H1 (cell line): ENCODE measurements at regions of chr12 and their contacts with region 1.

Region 1: DNA sequence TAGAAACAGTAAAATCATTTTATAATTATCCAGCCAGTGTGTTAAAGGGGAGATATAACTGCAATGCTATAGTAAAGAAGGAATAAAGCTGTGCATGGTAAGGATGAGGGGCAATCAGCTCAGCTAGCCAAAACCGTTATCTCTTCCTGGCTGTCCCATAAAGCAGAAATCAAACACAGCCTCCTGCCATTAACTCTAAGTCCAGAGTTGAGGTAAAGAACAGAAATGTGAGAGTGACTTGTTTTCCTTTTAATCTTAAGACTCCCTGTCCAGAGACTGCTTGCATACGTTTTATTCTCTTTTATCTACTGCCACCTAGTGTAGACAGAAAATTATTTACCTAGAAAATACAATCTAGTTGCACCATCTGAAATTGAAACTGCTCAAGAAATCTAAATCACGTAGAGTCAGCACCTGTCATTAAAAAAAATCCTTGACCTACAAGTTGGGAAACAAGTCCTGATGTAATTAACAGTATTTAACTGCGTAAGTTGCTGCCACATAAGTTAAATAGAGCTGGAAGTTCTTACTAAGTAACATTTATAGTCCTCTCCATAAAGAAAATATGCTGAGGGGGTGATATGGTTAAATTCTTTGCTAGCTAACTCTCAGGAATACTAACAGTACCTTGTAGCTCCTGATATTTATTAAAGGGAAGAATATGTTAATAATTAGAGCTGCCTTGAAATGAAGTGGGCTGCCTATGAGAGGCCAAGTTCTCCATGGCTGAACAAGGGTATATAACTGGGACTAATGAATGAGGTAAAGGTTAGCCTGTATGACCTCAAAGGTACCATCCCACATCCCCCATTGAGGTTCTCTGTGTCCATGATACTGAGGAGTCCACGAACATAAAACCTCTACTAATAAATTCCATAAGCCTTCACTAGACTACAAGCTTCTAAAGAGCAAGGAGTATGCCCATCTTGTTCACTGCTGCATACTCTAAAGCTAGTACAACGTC is 62.7 kb downstream of the GALNT4 start:
- DNase-seq: no peak
- H3K4me3 ChIP-seq: no peak overlapping the region
- H3K27ac ChIP-seq: no peak overlapping the region
- H3K4me1 ChIP-seq: peaks cover 0 to 4% (median 1%) of the 10 kb centered on the region in 4 experiments; a peak in 3 of 7 replicates
- H3K27me3 ChIP-seq: no peaks in the 10 kb centered on the region
- CTCF ChIP-seq: peak in 2 of 3 experiments; percentile 34 to 37; a peak in 2 of 4 replicates
- EP300 ChIP-seq: no peak
- POLR2A ChIP-seq: no peak
- RAD21 ChIP-seq: peak; percentile 78 to 84

Region 2: DNA sequence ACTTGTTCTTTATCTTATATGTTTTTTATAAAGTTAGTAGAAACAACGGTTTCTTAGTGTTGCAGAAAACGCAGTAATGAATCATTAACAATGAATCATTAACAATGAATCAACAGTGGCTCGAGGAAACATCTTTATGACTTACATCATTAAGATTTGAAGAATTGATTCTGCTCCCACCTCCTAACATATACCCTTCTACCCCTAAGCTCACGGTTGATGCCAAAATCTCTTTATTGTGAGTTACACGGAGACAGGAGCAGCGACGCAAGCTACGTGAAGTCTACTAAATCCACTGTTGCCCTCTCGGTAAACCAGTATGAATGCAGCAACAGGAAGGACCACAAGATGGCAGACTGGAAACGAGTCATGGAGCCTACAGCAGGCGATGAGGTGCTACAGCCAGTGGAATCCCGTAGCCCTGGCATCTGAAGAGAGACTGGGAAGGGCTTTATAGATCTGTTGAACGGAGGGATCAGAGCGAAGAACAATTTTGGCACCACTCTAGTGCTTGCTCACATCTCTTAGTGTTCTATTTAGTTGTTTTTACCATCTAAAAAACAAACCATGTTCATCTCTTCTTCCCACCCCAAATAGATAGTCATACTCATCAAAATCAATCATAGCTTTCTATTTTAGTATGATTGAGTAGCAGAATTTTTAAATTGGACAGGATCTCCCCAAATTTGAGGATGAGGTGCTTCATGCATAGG is 442.4 kb before region 1 on chr12:
- CTCF ChIA-PET with region 1: interaction called, 30 read pairs
- POLR2A ChIA-PET with region 1: no interaction called
- DNase-seq: peak; percentile 41 to 81
- H3K4me3 ChIP-seq: peak overlapping the region in 1 of 4 experiments; percentile 19; a peak in 1 of 8 replicates
- H3K27ac ChIP-seq: no peak overlapping the region
- H3K4me1 ChIP-seq: no peaks in the 10 kb centered on the region
- H3K27me3 ChIP-seq: no peaks in the 10 kb centered on the region
- CTCF ChIP-seq: peak; percentile 72 to 97 (median 96)
- EP300 ChIP-seq: no peak
- POLR2A ChIP-seq: no peak
- RAD21 ChIP-seq: peak; percentile 98 to 99

Region 3: DNA sequence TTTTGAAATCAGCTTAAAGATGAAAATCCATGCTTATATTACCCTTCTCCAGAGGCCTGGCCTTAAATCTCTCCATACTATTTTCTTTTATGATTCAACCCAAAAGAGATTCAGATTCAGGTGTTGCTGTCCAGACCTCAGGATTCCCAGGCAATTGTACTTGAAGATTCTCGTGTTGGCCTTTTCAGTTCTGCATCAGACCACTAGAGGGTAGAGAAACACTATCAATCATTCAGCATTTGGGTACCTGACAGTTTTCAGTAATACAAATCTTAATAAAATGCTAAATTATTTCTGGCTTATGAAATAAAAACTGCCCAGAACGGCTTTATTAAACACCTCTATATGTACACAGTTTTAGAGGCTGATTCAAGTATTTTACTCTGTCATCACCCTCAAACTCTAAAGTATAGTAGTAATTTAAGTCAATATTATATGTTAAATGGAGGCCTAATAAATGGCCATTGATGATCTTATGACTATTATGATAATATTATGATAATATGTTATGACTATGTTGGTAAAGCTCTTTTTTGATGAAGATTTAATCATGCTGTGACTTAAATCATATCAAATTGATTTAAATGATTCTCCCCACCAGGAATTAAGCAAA is 410.8 kb before region 1 on chr12:
- CTCF ChIA-PET with region 1: interaction called, 35 read pairs
- POLR2A ChIA-PET with region 1: no interaction called
- DNase-seq: no peak
- H3K4me3 ChIP-seq: no peak overlapping the region
- H3K27ac ChIP-seq: no peak overlapping the region
- H3K4me1 ChIP-seq: no peaks in the 10 kb centered on the region
- H3K27me3 ChIP-seq: no peaks in the 10 kb centered on the region; a peak in 1 of 7 replicates
- CTCF ChIP-seq: peak in 2 of 3 experiments; percentile 63 to 79; a peak in 3 of 4 replicates
- EP300 ChIP-seq: no peak
- POLR2A ChIP-seq: no peak
- RAD21 ChIP-seq: peak; percentile 96 to 97

Region 4: DNA sequence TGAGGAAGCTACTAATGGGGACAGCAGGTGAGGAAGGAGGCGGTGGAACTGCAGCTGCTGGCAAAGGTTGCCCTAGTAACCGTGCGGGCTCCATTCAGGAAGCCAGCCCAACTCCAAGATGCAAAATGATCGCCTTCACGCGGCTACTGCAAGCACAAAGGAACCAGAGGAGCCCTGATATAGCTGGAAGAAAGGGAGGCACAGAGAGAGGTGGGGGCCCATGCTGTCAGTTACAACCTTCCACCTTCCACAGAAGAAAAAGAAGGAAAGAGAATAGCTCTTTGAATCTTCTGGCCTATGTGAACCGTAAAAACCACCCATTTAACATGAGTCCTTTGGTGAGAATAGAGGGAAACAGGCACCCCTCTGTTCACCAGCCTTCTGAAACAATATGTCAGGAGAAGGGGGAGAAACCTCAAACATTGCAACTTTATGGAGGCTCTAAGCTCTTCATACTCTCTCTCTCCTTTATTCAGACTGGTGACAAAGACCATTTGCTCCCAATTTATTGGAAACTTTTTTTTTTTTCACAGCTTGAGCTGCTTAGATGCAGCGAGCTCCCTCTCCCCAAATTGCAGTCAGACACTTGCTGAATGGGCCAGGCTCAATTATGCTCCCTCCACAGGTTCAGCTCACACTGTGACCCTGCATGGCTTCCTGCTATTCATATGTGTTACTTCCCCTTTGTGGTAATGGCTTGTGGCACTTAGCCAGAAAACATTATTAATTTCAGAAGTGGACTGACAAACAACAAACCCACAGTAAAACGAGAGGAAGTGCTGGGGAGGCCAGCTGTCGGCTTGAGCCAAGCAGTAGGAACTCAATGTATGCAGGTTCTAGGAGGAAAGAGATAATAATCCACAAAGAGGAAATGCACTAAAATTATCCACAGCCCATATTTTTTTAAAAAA is 115.8 kb before region 1 on chr12:
- CTCF ChIA-PET with region 1: interaction called, 28 read pairs
- POLR2A ChIA-PET with region 1: interaction called, 8 read pairs
- DNase-seq: peak in 1 of 2 experiments; percentile 75
- H3K4me3 ChIP-seq: peak overlapping the region in 2 of 4 experiments; percentile 3 to 44; a peak in 4 of 8 replicates
- H3K27ac ChIP-seq: no peak overlapping the region
- H3K4me1 ChIP-seq: peaks cover 8 to 29% (median 22%) of the 10 kb centered on the region in 4 experiments
- H3K27me3 ChIP-seq: peaks cover 0 to 17% (median 6%) of the 10 kb centered on the region in 4 experiments; a peak in 6 of 7 replicates
- CTCF ChIP-seq: no peak
- EP300 ChIP-seq: no peak
- POLR2A ChIP-seq: peak in 1 of 2 experiments; percentile 52; a peak in 1 of 3 replicates
- RAD21 ChIP-seq: peak; percentile 14 to 32; a peak in 3 of 4 replicates

Region 5: DNA sequence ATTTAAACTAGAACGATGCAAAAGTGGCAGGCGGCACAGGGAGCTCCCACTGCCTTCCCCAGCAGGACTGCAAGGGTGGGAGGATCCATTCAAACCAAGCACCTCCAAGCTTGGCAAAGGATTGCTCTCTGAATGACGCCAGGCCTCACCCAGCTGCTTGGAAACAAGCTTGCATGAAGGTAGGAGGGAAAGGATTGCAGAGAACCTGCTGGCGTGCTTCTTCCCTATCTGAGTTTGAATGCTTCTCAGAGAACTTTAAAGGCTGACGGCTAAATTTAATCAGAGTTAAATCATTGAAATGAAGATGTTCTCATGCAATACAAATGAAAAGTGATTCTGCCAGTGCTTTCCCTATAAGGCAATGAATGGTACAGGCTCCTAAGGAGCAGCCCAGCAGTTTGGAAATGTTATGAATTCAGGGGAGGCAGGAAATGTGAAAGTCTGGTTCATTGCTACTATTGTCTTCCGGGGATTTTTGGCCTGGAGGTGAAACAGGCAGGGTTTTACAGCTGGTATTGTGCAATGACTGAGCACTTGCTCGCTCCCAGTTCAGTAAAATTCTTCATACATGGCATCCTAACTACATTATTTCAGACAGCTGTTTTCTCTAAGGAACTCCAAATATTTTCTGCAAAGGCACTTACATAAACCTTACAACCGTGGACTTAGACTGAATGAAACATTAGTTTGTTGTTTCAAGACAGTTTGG is 77.7 kb before region 1 on chr12:
- CTCF ChIA-PET with region 1: no interaction called
- POLR2A ChIA-PET with region 1: no interaction called
- DNase-seq: peak; percentile 15 to 52
- H3K4me3 ChIP-seq: no peak overlapping the region
- H3K27ac ChIP-seq: no peak overlapping the region
- H3K4me1 ChIP-seq: peaks cover 2 to 18% (median 10%) of the 10 kb centered on the region in 4 experiments; a peak in 6 of 7 replicates
- H3K27me3 ChIP-seq: no peaks in the 10 kb centered on the region
- CTCF ChIP-seq: no peak
- EP300 ChIP-seq: no peak
- POLR2A ChIP-seq: no peak
- RAD21 ChIP-seq: no peak

Region 6: DNA sequence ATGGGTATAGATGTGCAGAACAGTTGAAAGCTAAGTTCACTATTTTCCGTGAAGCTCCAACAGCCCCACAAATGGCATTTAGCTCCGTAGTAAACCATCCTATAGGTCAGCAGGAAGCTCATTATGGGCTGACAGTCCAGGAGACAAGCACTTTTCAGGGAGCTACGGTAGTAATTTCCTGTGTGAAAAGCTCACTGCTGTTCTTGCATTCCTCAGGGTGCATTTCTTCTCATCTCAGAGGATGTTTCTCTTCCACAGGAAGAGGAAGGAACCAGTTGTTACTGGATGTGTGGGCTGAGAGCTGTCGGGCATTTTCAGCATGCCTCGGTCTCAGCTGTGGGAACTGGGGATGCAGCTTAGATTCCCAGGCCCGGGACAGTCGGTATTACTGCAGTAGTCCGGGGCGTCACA is 10.1 kb before region 1 on chr12:
- CTCF ChIA-PET with region 1: interaction called, 11 read pairs
- POLR2A ChIA-PET with region 1: interaction called, 6 read pairs
- DNase-seq: peak; percentile 7 to 50
- H3K4me3 ChIP-seq: peak overlapping the region in 1 of 4 experiments; percentile 2; a peak in 1 of 8 replicates
- H3K27ac ChIP-seq: no peak overlapping the region
- H3K4me1 ChIP-seq: peaks cover 0 to 10% (median 6%) of the 10 kb centered on the region in 4 experiments; a peak in 3 of 7 replicates
- H3K27me3 ChIP-seq: no peaks in the 10 kb centered on the region
- CTCF ChIP-seq: no peak
- EP300 ChIP-seq: no peak
- POLR2A ChIP-seq: 0 out of 3 replicates have a peak, but pooled peaks of 1 of the 2 experiments have one; percentile 21
- RAD21 ChIP-seq: peak in 1 of 2 experiments; percentile 2; a peak in 1 of 4 replicates

Region 7: DNA sequence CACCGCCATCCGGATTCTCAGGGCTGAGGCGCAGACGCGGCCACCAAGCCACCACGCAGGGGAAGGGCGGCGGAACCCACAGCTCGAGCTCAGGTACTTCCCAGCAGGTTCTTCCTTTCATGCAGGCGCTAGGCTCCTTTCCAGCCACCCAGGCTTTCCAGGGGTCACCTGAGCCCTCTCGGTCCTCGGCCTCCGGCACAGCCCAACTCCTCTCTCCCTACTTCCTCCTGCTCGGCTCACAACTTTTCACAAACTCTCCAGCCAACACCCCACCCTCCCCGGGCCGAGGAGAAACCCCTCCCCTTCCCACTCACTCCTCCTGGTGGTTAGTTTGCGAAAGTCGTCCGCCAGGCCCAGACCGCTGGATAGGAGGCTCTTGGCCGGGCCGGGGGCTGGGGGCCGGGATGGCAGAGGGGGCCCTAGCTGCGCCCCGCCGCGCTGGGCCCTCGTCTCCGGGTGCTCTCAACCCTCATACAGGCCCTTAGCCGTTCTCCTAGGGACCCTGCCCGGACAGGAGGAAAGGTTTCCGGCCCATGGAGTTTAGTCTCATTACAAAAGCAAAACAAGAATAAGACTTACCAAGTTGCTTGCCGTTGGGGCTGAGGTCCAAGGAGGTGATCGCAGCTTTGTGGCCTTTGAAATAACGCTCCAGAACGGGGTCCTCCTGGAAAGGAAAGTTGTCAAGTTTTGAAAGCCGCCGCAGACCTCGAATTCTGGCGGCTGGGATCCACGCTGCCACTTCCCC is 62.8 kb after region 1 on chr12 and contains the start of gene GALNT4:
- CTCF ChIA-PET with region 1: interaction called, 23 read pairs
- POLR2A ChIA-PET with region 1: no interaction called
- DNase-seq: peak; percentile 47 to 88
- H3K4me3 ChIP-seq: peak within 1 kb of the TSS; percentile 76 to 92 (median 84)
- H3K27ac ChIP-seq: no peak within 1 kb of the TSS
- H3K4me1 ChIP-seq: peaks cover 0 to 3% (median 1%) of the 10 kb centered on the region in 4 experiments; a peak in 2 of 7 replicates
- H3K27me3 ChIP-seq: no peaks in the 10 kb centered on the region
- CTCF ChIP-seq: peak; percentile 59 to 78 (median 71)
- EP300 ChIP-seq: no peak
- POLR2A ChIP-seq: peak in 1 of 2 experiments; percentile 66; a peak in 1 of 3 replicates
- RAD21 ChIP-seq: peak; percentile 45 to 61
- total RNA-seq, gene GALNT4: 3.3 and 3.6 TPM in 2 replicates